ENCODE measurements at regions of chr10 and their contacts with region 1.

Region 1: GRCh38 chr10:59906417-59907202 is at the start of gene CCDC6:
- DNase-seq: peak; percentile 96 to 98
- ATAC-seq: peak; percentile 95
- H3K4me3 ChIP-seq: peak within 1 kb of the TSS; percentile 82 to 94
- H3K27ac ChIP-seq: peak within 1 kb of the TSS; percentile 64 to 81
- H3K4me1 ChIP-seq: peaks cover 1 to 2% of the 10 kb centered on the region in 2 donors
- H3K27me3 ChIP-seq: no peaks in the 10 kb centered on the region
- total RNA-seq, gene CCDC6: 78.0 to 90.0 TPM

Region 2: GRCh38 chr10:59234816-59235429 is 671.7 kb before region 1 on chr10:
- intact Hi-C with region 1: loop called in 1 of 2 experiments (anchors 10 kb)
- DNase-seq: no peak
- ATAC-seq: no peak
- H3K4me3 ChIP-seq: no peak overlapping the region
- H3K27ac ChIP-seq: no peak overlapping the region
- H3K4me1 ChIP-seq: no peaks in the 10 kb centered on the region
- H3K27me3 ChIP-seq: no peaks in the 10 kb centered on the region

Region 3: GRCh38 chr10:59830601-59831259 is 75.9 kb before region 1 on chr10:
- intact Hi-C with region 1: loop called in 1 of 2 experiments (anchors 5 kb)
- DNase-seq: no peak
- ATAC-seq: peak; percentile 63
- H3K4me3 ChIP-seq: no peak overlapping the region
- H3K27ac ChIP-seq: no peak overlapping the region
- H3K4me1 ChIP-seq: peaks cover 3 to 11% of the 10 kb centered on the region in 2 donors
- H3K27me3 ChIP-seq: no peaks in the 10 kb centered on the region

Region 4: GRCh38 chr10:59857049-59857448 is 49.6 kb before region 1 on chr10:
- intact Hi-C with region 1: loop called in 1 of 2 experiments (anchors 5 kb)
- DNase-seq: no peak
- ATAC-seq: no peak
- H3K4me3 ChIP-seq: no peak overlapping the region
- H3K27ac ChIP-seq: no peak overlapping the region
- H3K4me1 ChIP-seq: peaks cover 2 to 11% of the 10 kb centered on the region in 2 donors
- H3K27me3 ChIP-seq: no peaks in the 10 kb centered on the region

Region 5: GRCh38 chr10:59885430-59886134 is 21.0 kb before region 1 on chr10:
- intact Hi-C with region 1: no loop called
- DNase-seq: no peak
- ATAC-seq: no peak
- H3K4me3 ChIP-seq: no peak overlapping the region
- H3K27ac ChIP-seq: no peak overlapping the region
- H3K4me1 ChIP-seq: peaks cover 10 to 21% of the 10 kb centered on the region in 2 donors
- H3K27me3 ChIP-seq: no peaks in the 10 kb centered on the region

Region 6: DNA sequence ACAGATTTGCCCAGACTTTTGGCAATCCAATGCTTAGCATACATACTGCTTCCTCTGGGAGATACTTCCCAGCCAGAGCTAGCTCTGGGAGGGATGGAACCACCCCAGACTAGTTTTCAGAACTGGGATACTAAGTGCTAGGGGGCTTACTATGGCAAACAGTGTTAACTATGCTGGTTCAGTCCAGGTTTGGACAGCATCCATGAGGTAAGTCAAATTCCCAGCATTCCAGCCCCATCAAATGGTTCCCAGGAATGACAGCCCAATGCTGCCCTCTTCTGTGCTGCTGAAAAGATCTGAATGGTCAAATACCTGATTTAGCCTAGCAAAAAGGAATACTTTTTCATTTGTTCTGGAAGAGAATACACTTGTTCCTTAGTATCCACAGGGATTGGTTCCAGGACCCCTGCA is 141.5 kb after region 1 on chr10:
- intact Hi-C with region 1: loop called in 1 of 2 experiments (anchors 5 kb)
- DNase-seq: no peak
- ATAC-seq: no peak
- H3K4me3 ChIP-seq: no peak overlapping the region
- H3K27ac ChIP-seq: no peak overlapping the region
- H3K4me1 ChIP-seq: peaks cover 0 to 1% of the 10 kb centered on the region in 2 donors
- H3K27me3 ChIP-seq: no peaks in the 10 kb centered on the region